ENCODE measurements at regions of chr13 and their contacts with region 1.

Region 1: GRCh38 chr13:97109841-97110492 is 112.2 kb upstream of the MBNL2 start:
- DNase-seq: peak; percentile 95
- H3K4me3 ChIP-seq: no peak overlapping the region
- H3K27ac ChIP-seq: no peak overlapping the region
- H3K27me3 ChIP-seq: no peaks in the 10 kb centered on the region
- CTCF ChIP-seq: peak; percentile 79

Region 2: GRCh38 chr13:97212601-97213040 is 102.7 kb after region 1 on chr13:
- in situ Hi-C with region 1: loop called (anchors 10 kb)
- DNase-seq: peak; percentile 60
- H3K4me3 ChIP-seq: no peak overlapping the region
- H3K27ac ChIP-seq: no peak overlapping the region
- H3K27me3 ChIP-seq: no peaks in the 10 kb centered on the region
- CTCF ChIP-seq: peak; percentile 84

Region 3: GRCh38 chr13:97359181-97360057 is 249.5 kb after region 1 on chr13:
- in situ Hi-C with region 1: loop called (anchors 25 kb)
- DNase-seq: peak; percentile 75
- H3K4me3 ChIP-seq: no peak overlapping the region
- H3K27ac ChIP-seq: no peak overlapping the region
- H3K27me3 ChIP-seq: no peaks in the 10 kb centered on the region
- CTCF ChIP-seq: peak; percentile 90